Panc1 (cell line): ENCODE measurements at regions of chr12 and their contacts with region 1.

Region 1: DNA sequence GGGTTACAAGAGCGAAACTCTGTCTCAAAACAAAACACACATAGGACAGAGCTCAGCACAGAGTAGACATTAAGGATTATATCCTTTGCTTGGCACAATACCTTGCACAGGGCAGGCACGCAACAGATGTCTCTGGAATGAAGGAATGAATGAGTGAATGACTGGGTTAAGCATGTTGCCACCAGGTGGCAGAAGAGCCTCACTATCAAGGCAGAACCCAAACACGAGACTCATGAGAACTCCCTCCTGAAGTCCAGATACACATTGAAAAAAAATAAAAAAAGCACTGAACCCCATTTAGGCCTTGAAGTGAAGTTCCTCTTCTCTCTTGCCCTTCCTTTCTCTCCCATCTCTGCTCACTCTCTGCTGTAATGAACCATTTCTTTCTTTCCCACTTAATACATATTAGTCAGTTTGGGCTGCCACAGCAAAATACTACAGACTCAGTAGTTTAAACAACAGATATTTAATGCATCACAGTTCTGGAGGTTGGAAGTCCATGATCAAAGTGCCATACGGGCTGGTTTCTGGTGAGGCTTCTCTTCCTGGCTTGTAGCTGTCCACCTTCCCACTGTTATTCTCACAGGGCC is 26.6 kb upstream of the LTA4H start:
- DNase-seq: peak; percentile 64
- ATAC-seq: peak; percentile 93
- H3K4me3 ChIP-seq: no peak overlapping the region
- H3K27ac ChIP-seq: no peak overlapping the region
- H3K4me1 ChIP-seq: no peaks in the 10 kb centered on the region
- H3K27me3 ChIP-seq: no peaks in the 10 kb centered on the region
- CTCF ChIP-seq: peak; percentile 83

Region 2: GRCh38 chr12:95674631-95675030 is 387.3 kb before region 1 on chr12:
- CTCF ChIA-PET with region 1: no interaction called
- POLR2A ChIA-PET with region 1: no interaction called
- in situ Hi-C with region 1: no loop called
- intact Hi-C with region 1: no loop called
- DNase-seq: no peak
- ATAC-seq: no peak
- H3K4me3 ChIP-seq: no peak overlapping the region
- H3K27ac ChIP-seq: no peak overlapping the region
- H3K4me1 ChIP-seq: no peaks in the 10 kb centered on the region
- H3K27me3 ChIP-seq: no peaks in the 10 kb centered on the region; the same call in 1 of the 2 replicates
- CTCF ChIP-seq: no peak

Region 3: GRCh38 chr12:96132819-96133218 is 70.9 kb after region 1 on chr12:
- CTCF ChIA-PET with region 1: interaction called, 3 read pairs
- POLR2A ChIA-PET with region 1: no interaction called
- in situ Hi-C with region 1: no loop called
- intact Hi-C with region 1: loop called (anchors 2 kb)
- DNase-seq: no peak
- ATAC-seq: no peak
- H3K4me3 ChIP-seq: no peak overlapping the region
- H3K27ac ChIP-seq: no peak overlapping the region
- H3K4me1 ChIP-seq: no peaks in the 10 kb centered on the region
- H3K27me3 ChIP-seq: peaks cover 2% of the 10 kb centered on the region; the same call in 1 of the 2 replicates
- CTCF ChIP-seq: peak; percentile 49

Region 4: GRCh38 chr12:96219698-96220206 is 157.8 kb after region 1 on chr12:
- CTCF ChIA-PET with region 1: interaction called, 4 read pairs
- POLR2A ChIA-PET with region 1: no interaction called
- in situ Hi-C with region 1: no loop called
- intact Hi-C with region 1: loop called (anchors 1 kb)
- DNase-seq: no peak
- ATAC-seq: peak; percentile 96
- H3K4me3 ChIP-seq: peak overlapping the region; percentile 21 to 49
- H3K27ac ChIP-seq: peak overlapping the region; percentile 89
- H3K4me1 ChIP-seq: peaks cover 18% of the 10 kb centered on the region
- H3K27me3 ChIP-seq: no peaks in the 10 kb centered on the region
- CTCF ChIP-seq: no peak

Region 5: GRCh38 chr12:96483116-96483515 is 421.2 kb after region 1 on chr12:
- CTCF ChIA-PET with region 1: no interaction called
- POLR2A ChIA-PET with region 1: no interaction called
- in situ Hi-C with region 1: no loop called
- intact Hi-C with region 1: no loop called
- DNase-seq: no peak
- ATAC-seq: no peak
- H3K4me3 ChIP-seq: no peak overlapping the region
- H3K27ac ChIP-seq: no peak overlapping the region
- H3K4me1 ChIP-seq: no peaks in the 10 kb centered on the region
- H3K27me3 ChIP-seq: no peaks in the 10 kb centered on the region
- CTCF ChIP-seq: no peak